Activated B cell treated with CpG ODN at 0.5 μM for 24 hours (primary cell): ENCODE measurements at regions of chr11 and their contacts with region 1.

Region 1: DNA sequence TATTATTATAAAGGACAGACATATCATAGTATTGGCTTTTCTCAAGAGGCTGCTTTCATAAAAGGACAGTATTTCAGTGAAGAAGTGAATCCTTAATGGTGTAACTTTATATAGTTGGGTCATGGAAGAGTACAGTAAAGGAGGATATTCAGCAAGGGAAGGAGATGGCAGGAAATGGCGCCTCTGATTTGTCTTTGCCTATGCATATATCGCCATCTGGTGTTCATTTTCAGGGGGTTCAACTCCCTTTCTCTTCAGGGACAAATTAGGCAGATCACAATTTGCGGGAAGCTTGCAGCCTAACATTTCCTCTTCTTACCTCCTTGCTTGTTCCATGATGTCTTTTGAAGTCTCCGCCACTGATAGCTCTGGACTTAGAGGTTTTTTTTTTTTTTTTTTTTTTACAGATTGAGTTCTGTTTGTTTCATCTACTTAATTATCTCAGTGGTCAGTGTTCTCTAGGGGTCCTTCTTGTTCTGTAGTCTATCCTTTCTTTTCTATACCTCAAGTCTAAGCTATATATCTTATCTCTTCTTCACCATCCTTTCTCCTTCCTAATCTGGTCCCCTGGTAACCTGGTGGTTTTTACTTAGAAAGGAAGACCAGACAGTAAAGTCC is 21.8 kb upstream of the RRM1 start:
- DNase-seq: no peak
- ATAC-seq: peak; percentile 79
- H3K4me3 Mint-ChIP-seq: no peak overlapping the region
- H3K27ac Mint-ChIP-seq: peak overlapping the region; percentile 77
- H3K4me1 Mint-ChIP-seq: peaks cover 18% of the 10 kb centered on the region
- H3K27me3 Mint-ChIP-seq: no peaks in the 10 kb centered on the region
- CTCF ChIP-seq: no peak

Region 2: DNA sequence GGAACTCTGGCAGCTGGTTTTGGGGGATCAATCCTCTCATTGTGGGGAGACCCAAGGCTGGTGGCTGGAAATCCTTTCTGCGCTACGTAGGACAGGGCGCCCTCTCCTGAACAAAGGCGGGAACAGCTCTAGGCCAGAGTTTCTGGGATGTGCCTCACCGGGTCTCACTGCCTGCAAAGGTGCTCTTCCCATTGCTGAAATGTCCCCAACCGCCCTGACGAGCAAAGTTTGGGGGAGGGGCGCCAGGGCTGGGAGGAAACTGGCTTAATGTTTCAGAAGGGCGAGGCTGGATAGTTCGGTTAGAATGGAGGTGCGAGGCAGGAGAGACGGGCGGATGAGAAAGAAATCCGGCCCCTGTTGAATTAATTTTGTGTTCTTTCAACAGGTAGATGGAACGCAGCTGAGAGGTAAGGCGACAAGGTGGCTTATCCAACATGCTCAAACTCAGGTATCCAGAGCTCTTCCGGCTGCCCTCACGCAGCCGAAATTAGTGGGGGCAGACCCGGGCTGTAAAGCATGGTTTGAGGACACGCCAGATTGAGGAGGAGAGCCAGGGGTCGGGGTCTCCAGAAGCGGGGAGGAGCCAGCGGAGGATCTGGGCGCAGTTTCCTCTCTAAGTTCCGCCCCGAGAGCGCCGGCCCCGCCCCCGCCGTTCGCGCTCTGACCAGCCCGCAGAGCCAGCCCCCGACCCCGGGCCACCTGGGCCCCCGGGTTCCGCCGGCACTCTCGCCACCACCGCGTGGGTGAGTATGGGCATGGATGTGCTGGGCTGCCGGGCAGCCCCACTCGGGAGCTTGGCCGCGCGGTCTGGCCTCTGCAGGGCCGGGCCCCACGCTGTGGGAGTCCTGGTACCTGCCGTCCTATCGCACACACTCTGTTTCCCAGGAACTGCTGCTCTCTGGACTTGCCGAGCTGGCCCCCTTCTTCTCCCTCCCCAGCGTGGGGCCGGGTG is 264.6 kb before region 1 on chr11 and contains the start of gene PGAP2:
- CTCF ChIA-PET with region 1: interaction called, 21 read pairs
- POLR2A ChIA-PET with region 1: no interaction called
- intact Hi-C with region 1: no loop called
- DNase-seq: peak; percentile 67
- ATAC-seq: peak; percentile 85
- H3K4me3 Mint-ChIP-seq: peak within 1 kb of the TSS; percentile 94
- H3K27ac Mint-ChIP-seq: peak within 1 kb of the TSS; percentile 68
- H3K4me1 Mint-ChIP-seq: peaks cover 13% of the 10 kb centered on the region
- H3K27me3 Mint-ChIP-seq: no peaks in the 10 kb centered on the region
- CTCF ChIP-seq: no peak
- total RNA-seq, gene PGAP2: 19.7 and 25.0 TPM in 2 replicates

Region 3: GRCh38 chr11:3834664-3835461 is 237.9 kb before region 1 on chr11:
- CTCF ChIA-PET with region 1: interaction called, 46 read pairs
- POLR2A ChIA-PET with region 1: no interaction called
- intact Hi-C with region 1: loop called (anchors 2 kb)
- DNase-seq: no peak
- ATAC-seq: no peak
- H3K4me3 Mint-ChIP-seq: peak overlapping the region; percentile 65
- H3K27ac Mint-ChIP-seq: peak overlapping the region; percentile 76
- H3K4me1 Mint-ChIP-seq: peaks cover 93% of the 10 kb centered on the region
- H3K27me3 Mint-ChIP-seq: no peaks in the 10 kb centered on the region
- CTCF ChIP-seq: no peak

Region 4: DNA sequence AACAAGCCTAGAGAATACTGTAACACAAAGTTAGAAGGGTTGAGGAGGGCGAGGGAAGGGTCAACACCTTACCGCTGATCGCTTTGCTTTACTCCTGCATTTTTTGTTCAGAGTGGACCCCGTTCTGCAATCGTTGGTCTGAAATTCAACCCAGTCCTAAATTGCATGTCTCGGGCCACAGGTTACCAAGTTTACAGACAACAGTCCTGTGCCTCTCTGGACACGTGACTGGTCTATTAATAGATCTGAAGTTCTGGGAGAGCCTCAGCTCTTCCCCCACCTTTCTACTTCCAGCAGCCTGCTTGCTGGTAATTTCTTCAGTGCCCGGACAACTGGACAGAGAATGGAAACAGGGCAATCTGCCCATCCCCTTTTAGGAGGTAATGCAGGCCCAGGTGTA is 143.1 kb before region 1 on chr11:
- CTCF ChIA-PET with region 1: interaction called, 11 read pairs
- POLR2A ChIA-PET with region 1: interaction called, 5 read pairs
- intact Hi-C with region 1: no loop called
- DNase-seq: no peak
- ATAC-seq: no peak
- H3K4me3 Mint-ChIP-seq: no peak overlapping the region
- H3K27ac Mint-ChIP-seq: no peak overlapping the region
- H3K4me1 Mint-ChIP-seq: peaks cover 55% of the 10 kb centered on the region
- H3K27me3 Mint-ChIP-seq: no peaks in the 10 kb centered on the region
- CTCF ChIP-seq: no peak

Region 5: GRCh38 chr11:4054643-4055042 is 18.1 kb before region 1 on chr11:
- CTCF ChIA-PET with region 1: interaction called, 65 read pairs
- POLR2A ChIA-PET with region 1: interaction called, 8 read pairs
- intact Hi-C with region 1: loop called (anchors 1 kb)
- DNase-seq: no peak
- ATAC-seq: no peak
- H3K4me3 Mint-ChIP-seq: no peak overlapping the region
- H3K27ac Mint-ChIP-seq: no peak overlapping the region
- H3K4me1 Mint-ChIP-seq: peaks cover 25% of the 10 kb centered on the region
- H3K27me3 Mint-ChIP-seq: no peaks in the 10 kb centered on the region
- CTCF ChIP-seq: no peak

Region 6: GRCh38 chr11:4086575-4087353 is 14.0 kb after region 1 on chr11:
- CTCF ChIA-PET with region 1: interaction called, 13 read pairs
- POLR2A ChIA-PET with region 1: no interaction called
- intact Hi-C with region 1: no loop called
- DNase-seq: no peak
- ATAC-seq: no peak
- H3K4me3 Mint-ChIP-seq: no peak overlapping the region
- H3K27ac Mint-ChIP-seq: no peak overlapping the region
- H3K4me1 Mint-ChIP-seq: peaks cover 12% of the 10 kb centered on the region
- H3K27me3 Mint-ChIP-seq: no peaks in the 10 kb centered on the region
- CTCF ChIP-seq: no peak

Region 7: GRCh38 chr11:4102711-4103110 is 29.9 kb after region 1 on chr11:
- CTCF ChIA-PET with region 1: no interaction called
- POLR2A ChIA-PET with region 1: no interaction called
- intact Hi-C with region 1: no loop called
- DNase-seq: no peak
- ATAC-seq: no peak
- H3K4me3 Mint-ChIP-seq: no peak overlapping the region
- H3K27ac Mint-ChIP-seq: no peak overlapping the region
- H3K4me1 Mint-ChIP-seq: no peaks in the 10 kb centered on the region
- H3K27me3 Mint-ChIP-seq: no peaks in the 10 kb centered on the region
- CTCF ChIP-seq: no peak

Region 8: GRCh38 chr11:4821021-4821420 is 748.2 kb after region 1 on chr11 and contains the start of gene OR51F2:
- CTCF ChIA-PET with region 1: no interaction called
- POLR2A ChIA-PET with region 1: no interaction called
- intact Hi-C with region 1: no loop called
- DNase-seq: no peak
- ATAC-seq: no peak
- H3K4me3 Mint-ChIP-seq: no peak within 1 kb of the TSS
- H3K27ac Mint-ChIP-seq: no peak within 1 kb of the TSS
- H3K4me1 Mint-ChIP-seq: no peaks in the 10 kb centered on the region
- H3K27me3 Mint-ChIP-seq: no peaks in the 10 kb centered on the region
- CTCF ChIP-seq: no peak
- total RNA-seq, gene OR51F2: not detected in 2 replicates